ENCODE measurements at regions of chr7 and their contacts with region 1.

Region 1: GRCh38 chr7:123797673-123798527 is 47.1 kb upstream of the HYAL4 start:
- DNase-seq: no peak
- ATAC-seq: peak; percentile 88
- H3K4me3 Mint-ChIP-seq: no peak overlapping the region
- H3K27ac Mint-ChIP-seq: peak overlapping the region; percentile 75; the same call in 1 of the 2 replicates
- H3K4me1 Mint-ChIP-seq: peaks cover 19% of the 10 kb centered on the region
- H3K27me3 Mint-ChIP-seq: no peaks in the 10 kb centered on the region
- CTCF ChIP-seq: peak; percentile 19; the same call in 1 of the 2 replicates

Region 2: DNA sequence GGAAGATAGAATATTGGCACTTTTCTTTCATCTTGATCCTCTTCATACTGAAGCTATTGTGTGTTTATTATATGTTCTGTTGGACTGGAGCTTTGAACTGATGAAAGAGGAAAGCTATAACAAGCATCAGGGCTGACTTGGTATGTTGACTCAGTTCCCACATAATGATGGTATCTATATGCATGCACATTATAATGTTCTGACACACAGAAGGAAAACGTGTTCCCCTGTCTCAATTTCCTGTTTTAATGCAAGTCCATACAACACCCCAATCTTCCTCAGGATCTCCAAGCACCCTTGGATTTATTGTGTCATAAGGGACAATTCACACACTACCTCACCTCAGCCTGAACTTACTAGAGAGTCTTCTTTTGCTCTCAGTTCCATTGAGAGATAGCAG is 40.8 kb before region 1 on chr7:
- CTCF ChIA-PET with region 1: no interaction called
- POLR2A ChIA-PET with region 1: no interaction called
- DNase-seq: no peak
- ATAC-seq: no peak
- H3K4me3 Mint-ChIP-seq: no peak overlapping the region
- H3K27ac Mint-ChIP-seq: no peak overlapping the region
- H3K4me1 Mint-ChIP-seq: peaks cover 29% of the 10 kb centered on the region
- H3K27me3 Mint-ChIP-seq: no peaks in the 10 kb centered on the region
- CTCF ChIP-seq: no peak

Region 3: GRCh38 chr7:123784263-123784662 is 13.6 kb before region 1 on chr7:
- CTCF ChIA-PET with region 1: no interaction called
- POLR2A ChIA-PET with region 1: no interaction called
- DNase-seq: no peak
- ATAC-seq: no peak
- H3K4me3 Mint-ChIP-seq: no peak overlapping the region
- H3K27ac Mint-ChIP-seq: no peak overlapping the region
- H3K4me1 Mint-ChIP-seq: peaks cover 38% of the 10 kb centered on the region
- H3K27me3 Mint-ChIP-seq: no peaks in the 10 kb centered on the region
- CTCF ChIP-seq: no peak

Region 4: GRCh38 chr7:123865517-123866117 is 67.7 kb after region 1 on chr7:
- CTCF ChIA-PET with region 1: interaction called, 41 read pairs
- POLR2A ChIA-PET with region 1: no interaction called
- DNase-seq: peak; percentile 42
- ATAC-seq: peak; percentile 95
- H3K4me3 Mint-ChIP-seq: no peak overlapping the region
- H3K27ac Mint-ChIP-seq: 0 out of 2 replicates have a peak overlapping the region, but pooled peaks have one; percentile 15
- H3K4me1 Mint-ChIP-seq: peaks cover 19% of the 10 kb centered on the region
- H3K27me3 Mint-ChIP-seq: no peaks in the 10 kb centered on the region
- CTCF ChIP-seq: peak; percentile 63

Region 5: DNA sequence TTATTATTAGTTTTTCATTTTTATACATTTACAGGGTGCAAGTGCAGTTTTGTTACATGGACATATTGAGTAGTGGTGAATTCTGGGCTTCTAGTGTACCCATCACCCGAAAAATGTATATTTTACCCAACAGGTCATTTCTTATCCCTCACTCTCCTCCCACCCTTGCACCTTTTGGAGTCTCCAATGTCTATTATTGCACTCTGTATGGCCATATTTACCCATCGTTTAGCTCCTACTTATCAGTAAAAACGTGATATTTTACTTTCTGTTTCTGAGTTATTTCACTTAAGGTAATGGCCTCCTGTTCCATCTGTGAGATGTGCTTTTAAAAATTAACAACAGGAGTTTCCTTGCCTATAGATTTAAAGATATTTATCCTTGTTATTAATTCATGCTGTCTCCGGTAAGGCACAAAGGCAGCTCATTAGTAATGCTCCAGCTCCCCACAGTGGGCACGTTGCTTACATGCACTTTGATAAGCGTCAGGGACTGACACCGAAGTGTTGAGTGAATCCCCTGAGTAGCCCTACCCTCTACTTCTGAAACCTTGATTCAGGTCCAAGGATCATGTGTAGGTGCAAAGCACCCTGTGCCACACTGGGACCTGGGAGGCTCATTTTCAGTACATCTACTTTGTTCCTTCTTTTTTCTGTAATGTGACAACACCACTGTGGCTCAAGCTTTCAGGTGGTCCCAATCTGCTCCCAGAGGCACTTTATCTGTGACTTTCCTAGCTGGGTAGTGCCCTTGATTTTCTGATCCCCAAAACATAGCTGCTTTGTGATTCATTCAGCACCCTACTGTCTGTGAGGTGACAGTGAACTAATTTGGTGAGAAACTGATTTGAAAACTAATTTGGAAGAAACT is 74.3 kb after region 1 on chr7:
- CTCF ChIA-PET with region 1: interaction called, 36 read pairs
- POLR2A ChIA-PET with region 1: no interaction called
- DNase-seq: peak; percentile 55
- ATAC-seq: peak; percentile 99
- H3K4me3 Mint-ChIP-seq: no peak overlapping the region
- H3K27ac Mint-ChIP-seq: no peak overlapping the region
- H3K4me1 Mint-ChIP-seq: peaks cover 9% of the 10 kb centered on the region; the same call in 1 of the 2 replicates
- H3K27me3 Mint-ChIP-seq: no peaks in the 10 kb centered on the region
- CTCF ChIP-seq: no peak

Measured in WTC11 (cell line).